Activated CD4-positive, alpha-beta T cell treated with anti-CD3 and anti-CD28 coated beads, Interleukin-2, amount 10 ng/mL, durations not matched to agents 24 days and 14 days (primary cell): ENCODE measurements at regions of chr20 and their contacts with region 1.

Region 1: DNA sequence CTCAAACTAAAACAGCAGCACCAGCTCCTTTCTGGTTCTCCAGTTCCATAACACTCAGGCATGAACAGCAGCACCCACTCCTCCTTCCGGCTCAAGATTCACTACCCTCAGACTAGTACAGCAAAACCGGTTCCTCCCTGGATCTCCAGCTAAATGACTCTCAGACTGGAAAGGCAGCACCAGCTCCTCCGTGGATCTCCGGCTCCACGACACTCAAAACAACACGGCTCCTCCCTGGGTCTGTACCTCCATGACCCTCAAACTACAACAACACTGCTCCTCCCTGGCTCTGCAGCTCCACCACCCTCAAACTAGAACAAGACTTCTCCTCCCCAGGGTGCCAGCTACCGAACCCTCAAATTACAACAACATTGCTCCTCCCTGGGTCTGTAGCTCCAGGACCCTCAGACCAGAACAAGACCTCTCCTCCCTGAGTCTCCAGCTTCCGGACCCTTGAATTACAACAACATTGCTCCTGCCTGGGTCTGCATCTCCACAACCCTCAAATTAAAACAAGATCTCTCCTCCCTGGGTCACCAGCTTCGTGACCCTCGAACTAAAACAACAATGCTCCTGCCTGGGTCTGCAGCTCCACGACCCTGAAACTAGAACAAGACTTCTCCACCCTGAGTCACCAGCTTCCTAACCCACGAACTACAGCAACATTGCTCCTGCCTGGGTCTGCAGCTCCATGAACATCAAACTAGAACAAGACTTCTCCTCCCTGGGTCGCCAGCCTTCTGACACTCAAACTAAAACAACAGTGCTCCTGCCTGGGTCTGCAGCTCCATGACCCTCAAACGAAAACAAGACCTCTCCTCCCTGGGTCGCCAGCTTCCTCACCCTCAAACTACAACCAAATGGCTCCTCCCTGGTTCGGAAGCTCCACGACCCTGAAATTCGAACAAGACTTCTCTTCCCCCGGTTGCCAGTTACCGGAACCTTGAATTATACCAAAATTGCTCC is 324.7 kb downstream of the PREX1 start:
- DNase-seq: no peak
- H3K4me3 Mint-ChIP-seq: no peak overlapping the region
- H3K27ac Mint-ChIP-seq: no peak overlapping the region
- H3K4me1 Mint-ChIP-seq: no peaks in the 10 kb centered on the region
- H3K27me3 Mint-ChIP-seq: no peaks in the 10 kb centered on the region

Region 2: GRCh38 chr20:47886460-47887041 is 616.6 kb before region 1 on chr20:
- intact Hi-C with region 1: loop called (anchors 5 kb)
- DNase-seq: no peak
- H3K4me3 Mint-ChIP-seq: no peak overlapping the region
- H3K27ac Mint-ChIP-seq: no peak overlapping the region
- H3K4me1 Mint-ChIP-seq: no peaks in the 10 kb centered on the region
- H3K27me3 Mint-ChIP-seq: no peaks in the 10 kb centered on the region

Region 3: GRCh38 chr20:48002227-48002970 is 500.7 kb before region 1 on chr20:
- intact Hi-C with region 1: no loop called
- DNase-seq: no peak
- H3K4me3 Mint-ChIP-seq: no peak overlapping the region
- H3K27ac Mint-ChIP-seq: no peak overlapping the region
- H3K4me1 Mint-ChIP-seq: no peaks in the 10 kb centered on the region
- H3K27me3 Mint-ChIP-seq: peaks cover 4% of the 10 kb centered on the region